ENCODE measurements at regions of chr2 and their contacts with region 1.

Region 1: DNA sequence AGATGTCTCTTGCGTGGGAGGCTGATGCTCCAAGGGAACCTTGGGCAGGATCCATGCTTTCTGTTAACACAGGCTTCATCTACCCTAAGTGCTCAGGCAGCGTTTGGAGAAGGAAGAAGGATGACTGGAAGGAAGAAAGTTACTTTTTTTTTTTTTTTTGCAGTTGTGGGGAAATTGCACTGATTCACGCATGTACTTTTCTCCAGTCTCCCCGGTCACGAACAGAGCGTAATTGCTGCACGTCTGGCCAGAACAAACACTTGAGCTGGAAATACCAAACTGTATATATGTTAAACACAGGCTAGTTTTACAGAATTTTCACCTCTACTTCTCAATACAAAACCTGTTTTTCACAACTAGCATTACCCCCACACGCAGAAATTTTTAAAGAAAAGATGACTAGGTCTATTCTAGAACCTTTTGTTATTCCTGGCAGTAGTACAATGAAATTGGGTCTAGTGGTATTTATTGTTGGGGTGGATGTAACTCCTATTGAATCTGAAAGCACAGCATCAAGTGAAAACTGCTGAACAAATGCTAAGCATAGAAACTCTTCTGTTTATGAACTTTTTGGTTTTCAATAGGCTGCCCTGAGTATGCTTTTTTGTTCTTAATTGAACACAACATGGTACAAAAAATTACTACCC is 9.3 kb upstream of the SCYGR5 start:
- DNase-seq: no peak
- ATAC-seq: no peak
- H3K4me3 ChIP-seq: no peak overlapping the region
- H3K4me3 Mint-ChIP-seq: no peak overlapping the region
- H3K27ac ChIP-seq: no peak overlapping the region
- H3K27ac Mint-ChIP-seq: no peak overlapping the region
- H3K4me1 ChIP-seq: no peaks in the 10 kb centered on the region
- H3K4me1 Mint-ChIP-seq: no peaks in the 10 kb centered on the region
- H3K27me3 ChIP-seq: no peaks in the 10 kb centered on the region
- H3K27me3 Mint-ChIP-seq: no peaks in the 10 kb centered on the region
- CTCF ChIP-seq: no peak

Region 2: DNA sequence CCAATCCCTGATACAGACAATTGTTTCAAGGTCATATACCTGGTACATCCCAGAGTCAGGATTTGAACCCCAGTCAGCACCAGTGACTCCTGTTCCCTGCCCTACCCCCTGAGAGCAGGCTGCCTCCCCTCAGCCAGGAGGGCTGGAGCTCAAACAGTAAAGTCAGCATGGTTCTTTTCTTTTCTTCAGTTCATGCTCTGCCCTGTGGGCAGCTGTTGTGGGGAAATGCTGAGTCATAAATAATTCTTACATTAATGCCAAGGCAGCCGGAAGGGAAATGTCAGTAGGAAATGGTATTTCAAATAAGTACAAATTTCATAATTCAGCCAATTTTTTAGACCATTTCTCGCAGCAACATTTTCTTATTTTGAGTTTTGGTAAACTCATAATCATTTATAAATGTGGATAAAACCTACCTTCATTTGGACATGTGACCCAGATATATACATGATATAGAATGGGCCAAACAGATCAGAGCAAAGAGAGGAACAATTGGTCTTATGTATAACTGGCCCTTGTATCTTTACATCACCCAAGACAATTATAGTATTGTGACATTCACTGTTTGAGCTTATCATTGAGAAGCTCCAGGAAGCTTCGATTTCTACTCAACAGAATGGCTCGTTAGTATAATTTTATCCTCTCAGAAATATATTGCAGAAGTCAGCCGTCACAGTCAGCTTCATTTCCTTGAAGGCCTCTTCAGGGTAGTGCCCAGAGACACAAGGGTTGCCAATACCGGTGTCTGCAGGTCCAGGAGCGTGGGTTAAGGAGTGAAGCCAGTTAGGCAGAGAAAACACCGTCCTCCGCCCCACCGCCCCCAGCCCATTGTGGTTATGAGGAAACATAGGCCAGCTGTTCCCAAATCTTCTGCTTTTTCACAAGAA is 241.5 kb before region 1 on chr2:
- CTCF ChIA-PET with region 1: no interaction called
- POLR2A ChIA-PET with region 1: no interaction called
- intact Hi-C with region 1: no loop called
- DNase-seq: peak; percentile 25
- ATAC-seq: peak; percentile 18
- H3K4me3 ChIP-seq: no peak overlapping the region
- H3K4me3 Mint-ChIP-seq: no peak overlapping the region
- H3K27ac ChIP-seq: peak overlapping the region in 1 of 2 donors; percentile 6
- H3K27ac Mint-ChIP-seq: peak overlapping the region; percentile 65
- H3K4me1 ChIP-seq: peaks cover 30% of the 10 kb centered on the region in 2 donors
- H3K4me1 Mint-ChIP-seq: peaks cover 36% of the 10 kb centered on the region
- H3K27me3 ChIP-seq: no peaks in the 10 kb centered on the region
- H3K27me3 Mint-ChIP-seq: no peaks in the 10 kb centered on the region
- CTCF ChIP-seq: no peak

Region 3: DNA sequence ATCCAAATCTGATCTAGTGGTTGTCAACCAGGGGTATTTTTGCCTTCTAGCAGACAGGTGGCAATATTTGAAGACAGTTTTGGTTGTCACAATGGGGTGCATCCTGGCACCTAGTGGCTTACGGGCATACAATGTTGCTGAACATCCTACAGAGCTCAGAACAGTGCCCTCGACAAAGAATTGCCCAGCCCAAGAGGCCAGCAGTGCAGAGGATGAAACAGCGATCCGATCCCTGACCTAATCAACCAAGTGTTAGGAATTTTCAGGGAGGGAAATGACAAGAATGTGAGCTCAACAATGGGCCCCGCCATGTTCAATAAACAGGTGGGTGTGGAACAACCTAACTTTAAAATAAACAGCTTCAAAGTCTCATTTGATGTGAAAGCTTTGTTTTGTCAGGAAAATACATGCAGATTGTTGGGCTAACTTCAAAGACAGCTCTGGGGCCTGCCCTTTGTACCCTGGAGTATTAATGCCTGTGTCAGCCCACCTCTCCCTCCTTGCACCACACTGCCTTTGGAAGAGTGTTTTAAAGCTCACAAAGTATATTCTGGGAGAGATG is 13.3 kb before region 1 on chr2:
- CTCF ChIA-PET with region 1: interaction called, 11 read pairs
- POLR2A ChIA-PET with region 1: no interaction called
- intact Hi-C with region 1: no loop called
- DNase-seq: no peak
- ATAC-seq: no peak
- H3K4me3 ChIP-seq: no peak overlapping the region
- H3K4me3 Mint-ChIP-seq: no peak overlapping the region
- H3K27ac ChIP-seq: no peak overlapping the region
- H3K27ac Mint-ChIP-seq: no peak overlapping the region
- H3K4me1 ChIP-seq: no peaks in the 10 kb centered on the region
- H3K4me1 Mint-ChIP-seq: no peaks in the 10 kb centered on the region
- H3K27me3 ChIP-seq: no peaks in the 10 kb centered on the region
- H3K27me3 Mint-ChIP-seq: peaks cover 12% of the 10 kb centered on the region
- CTCF ChIP-seq: no peak

Region 4: GRCh38 chr2:227671170-227672060 is 14.1 kb after region 1 on chr2:
- CTCF ChIA-PET with region 1: interaction called, 17 read pairs
- POLR2A ChIA-PET with region 1: no interaction called
- intact Hi-C with region 1: no loop called
- DNase-seq: no peak
- ATAC-seq: no peak
- H3K4me3 ChIP-seq: no peak overlapping the region
- H3K4me3 Mint-ChIP-seq: no peak overlapping the region
- H3K27ac ChIP-seq: no peak overlapping the region
- H3K27ac Mint-ChIP-seq: no peak overlapping the region
- H3K4me1 ChIP-seq: no peaks in the 10 kb centered on the region
- H3K4me1 Mint-ChIP-seq: no peaks in the 10 kb centered on the region
- H3K27me3 ChIP-seq: no peaks in the 10 kb centered on the region
- H3K27me3 Mint-ChIP-seq: peaks cover 15% of the 10 kb centered on the region
- CTCF ChIP-seq: no peak